T-cell (primary cell): ENCODE measurements at regions of chr14 and their contacts with region 1.

Region 1: GRCh38 chr14:98593361-98593761 is 678.6 kb downstream of the BCL11B start:
- DNase-seq: no peak
- ATAC-seq: no peak
- H3K4me3 ChIP-seq: no peak overlapping the region
- H3K4me3 Mint-ChIP-seq: no peak overlapping the region
- H3K27ac ChIP-seq: no peak overlapping the region
- H3K27ac Mint-ChIP-seq: no peak overlapping the region
- H3K4me1 ChIP-seq: no peaks in the 10 kb centered on the region
- H3K4me1 Mint-ChIP-seq: no peaks in the 10 kb centered on the region
- H3K27me3 ChIP-seq: no peaks in the 10 kb centered on the region
- H3K27me3 Mint-ChIP-seq: no peaks in the 10 kb centered on the region

Region 2: DNA sequence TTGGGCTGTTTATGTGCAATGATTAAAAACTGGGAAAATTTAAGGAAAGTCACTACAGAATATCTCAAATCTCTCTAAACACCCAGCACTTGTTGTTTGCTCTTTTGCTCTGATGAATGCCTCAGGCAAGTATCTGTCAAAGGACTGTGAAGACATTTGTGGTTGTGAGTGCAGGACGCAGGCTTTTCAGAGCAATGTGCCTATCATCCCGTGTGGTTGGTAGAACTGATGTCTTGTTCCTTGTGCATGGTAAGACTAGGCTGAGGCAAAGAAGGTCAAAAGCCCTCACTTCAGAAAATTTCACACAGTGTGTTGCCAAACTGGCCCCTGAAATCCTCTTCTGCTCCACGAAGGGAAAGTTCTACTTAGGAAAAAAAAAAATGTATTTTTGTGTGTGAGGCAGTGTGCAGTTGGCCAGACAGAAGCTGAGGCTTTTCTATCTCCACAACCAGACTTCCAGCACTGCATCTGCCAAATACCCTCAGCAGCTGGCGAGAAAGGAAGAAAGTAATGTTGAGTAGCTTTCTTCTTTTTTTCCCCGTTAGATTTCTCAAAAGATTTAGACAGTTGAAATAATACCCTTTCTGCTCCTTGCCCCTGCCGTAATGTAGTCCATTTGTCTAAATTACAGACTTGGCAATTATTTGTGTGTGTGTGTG is 693.0 kb before region 1 on chr14:
- CTCF ChIA-PET with region 1: interaction called in 1 of 2 experiments, 11 read pairs
- POLR2A ChIA-PET with region 1: no interaction called
- DNase-seq: no peak
- ATAC-seq: no peak
- H3K4me3 ChIP-seq: no peak overlapping the region
- H3K4me3 Mint-ChIP-seq: no peak overlapping the region
- H3K27ac ChIP-seq: no peak overlapping the region
- H3K27ac Mint-ChIP-seq: peak overlapping the region in 1 of 2 donors; percentile 8
- H3K4me1 ChIP-seq: peaks cover 0 to 3% of the 10 kb centered on the region in 2 experiments
- H3K4me1 Mint-ChIP-seq: peaks cover 0 to 3% (median 0%) of the 10 kb centered on the region in 3 donors
- H3K27me3 ChIP-seq: no peaks in the 10 kb centered on the region
- H3K27me3 Mint-ChIP-seq: no peaks in the 10 kb centered on the region

Region 3: DNA sequence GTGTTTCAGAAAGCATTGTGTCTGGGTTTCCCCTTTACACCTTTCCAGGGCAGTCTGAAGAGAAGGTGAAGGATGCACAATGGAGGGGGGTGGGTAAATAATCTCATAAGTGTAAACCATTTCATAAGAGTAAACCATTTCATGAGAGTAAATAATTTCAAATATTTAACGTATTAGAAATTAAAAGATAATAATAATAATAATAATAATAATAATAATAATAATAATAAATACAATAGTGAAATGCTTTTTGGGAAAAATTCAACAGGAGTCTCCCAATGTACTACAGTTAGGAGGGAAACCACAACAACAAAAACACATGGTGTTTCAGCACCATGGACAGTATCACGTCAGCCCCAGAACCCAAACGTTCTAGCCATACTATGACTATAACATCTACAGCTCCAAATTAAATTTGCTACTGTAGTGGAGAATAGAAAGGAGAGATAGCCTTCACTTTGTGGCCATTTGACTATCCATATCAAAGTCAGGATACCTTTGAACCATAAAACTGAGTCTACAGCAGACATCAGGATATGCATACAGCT is 13.2 kb before region 1 on chr14:
- CTCF ChIA-PET with region 1: no interaction called
- POLR2A ChIA-PET with region 1: no interaction called
- DNase-seq: peak in 6 of 35 experiments; percentile 3 to 60 (median 4)
- ATAC-seq: no peak
- H3K4me3 ChIP-seq: no peak overlapping the region
- H3K4me3 Mint-ChIP-seq: no peak overlapping the region
- H3K27ac ChIP-seq: no peak overlapping the region
- H3K27ac Mint-ChIP-seq: no peak overlapping the region
- H3K4me1 ChIP-seq: no peaks in the 10 kb centered on the region
- H3K4me1 Mint-ChIP-seq: no peaks in the 10 kb centered on the region
- H3K27me3 ChIP-seq: peaks cover 0 to 5% of the 10 kb centered on the region in 2 experiments
- H3K27me3 Mint-ChIP-seq: peaks cover 0 to 8% of the 10 kb centered on the region in 2 donors